ENCODE measurements at regions of chr18 and their contacts with region 1.

Region 1: GRCh38 chr18:31741097-31741735 is 19.5 kb downstream of the SLC25A52 start:
- DNase-seq: no peak
- ATAC-seq: peak; percentile 49

Region 2: DNA sequence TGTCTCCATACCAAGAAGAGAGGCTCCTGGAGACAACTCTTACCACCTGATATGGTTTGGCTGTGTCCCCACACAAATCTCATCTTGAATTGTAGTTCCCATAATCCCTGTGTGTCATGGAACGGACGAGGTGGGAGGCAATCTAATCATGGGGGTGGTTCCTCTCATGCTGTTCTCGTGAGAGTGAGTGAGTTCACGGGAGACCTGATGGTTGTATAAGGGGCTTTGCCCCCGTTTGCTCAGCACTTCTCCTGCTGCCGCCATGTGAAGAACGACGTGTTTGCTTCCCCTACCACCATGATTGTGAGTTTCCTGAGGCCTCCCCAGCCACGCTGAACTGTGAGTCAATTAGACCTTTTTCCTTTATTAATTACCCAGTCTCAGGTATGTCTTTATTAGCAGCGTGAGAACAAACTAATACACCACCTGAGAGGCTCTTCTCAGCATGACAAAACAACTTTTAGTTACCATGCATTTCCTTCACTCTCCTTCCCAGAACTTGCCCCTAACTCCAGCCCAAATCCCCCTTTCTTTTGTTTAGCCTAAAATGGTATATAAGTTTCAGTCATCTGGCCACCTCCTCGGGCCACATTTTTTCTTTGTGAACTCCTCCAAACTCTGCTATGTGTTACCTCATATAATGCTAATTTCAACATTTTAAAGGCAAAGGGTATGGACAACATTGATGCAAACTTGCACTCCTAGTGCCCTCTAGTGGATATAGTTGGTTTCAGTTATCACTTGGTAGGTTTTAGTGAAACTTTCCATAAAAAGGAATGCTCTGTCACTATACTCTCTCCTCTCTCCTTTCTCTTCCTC is 78.1 kb after region 1 on chr18:
- intact Hi-C with region 1: loop called (anchors 5 kb)
- DNase-seq: no peak
- ATAC-seq: peak; percentile 49

Region 3: GRCh38 chr18:31977270-31977872 is 236.2 kb after region 1 on chr18:
- intact Hi-C with region 1: loop called (anchors 5 kb)
- DNase-seq: no peak
- ATAC-seq: peak; percentile 62